BJ (cell line): ENCODE measurements at regions of chr22 and their contacts with region 1.

Region 1: GRCh38 chr22:20393909-20394691 is at the start of gene ZNF74:
- DNase-seq: peak; percentile 67
- H3K4me3 ChIP-seq: peak within 1 kb of the TSS; percentile 59
- H3K27me3 ChIP-seq: 0 out of 2 replicates have a peak, but pooled peaks cover 1% of the 10 kb centered on the region
- CTCF ChIP-seq: peak; percentile 17; the same call in 1 of the 2 replicates
- polyA plus RNA-seq, gene ZNF74: 4.5 and 6.9 TPM in 2 replicates

Region 2: DNA sequence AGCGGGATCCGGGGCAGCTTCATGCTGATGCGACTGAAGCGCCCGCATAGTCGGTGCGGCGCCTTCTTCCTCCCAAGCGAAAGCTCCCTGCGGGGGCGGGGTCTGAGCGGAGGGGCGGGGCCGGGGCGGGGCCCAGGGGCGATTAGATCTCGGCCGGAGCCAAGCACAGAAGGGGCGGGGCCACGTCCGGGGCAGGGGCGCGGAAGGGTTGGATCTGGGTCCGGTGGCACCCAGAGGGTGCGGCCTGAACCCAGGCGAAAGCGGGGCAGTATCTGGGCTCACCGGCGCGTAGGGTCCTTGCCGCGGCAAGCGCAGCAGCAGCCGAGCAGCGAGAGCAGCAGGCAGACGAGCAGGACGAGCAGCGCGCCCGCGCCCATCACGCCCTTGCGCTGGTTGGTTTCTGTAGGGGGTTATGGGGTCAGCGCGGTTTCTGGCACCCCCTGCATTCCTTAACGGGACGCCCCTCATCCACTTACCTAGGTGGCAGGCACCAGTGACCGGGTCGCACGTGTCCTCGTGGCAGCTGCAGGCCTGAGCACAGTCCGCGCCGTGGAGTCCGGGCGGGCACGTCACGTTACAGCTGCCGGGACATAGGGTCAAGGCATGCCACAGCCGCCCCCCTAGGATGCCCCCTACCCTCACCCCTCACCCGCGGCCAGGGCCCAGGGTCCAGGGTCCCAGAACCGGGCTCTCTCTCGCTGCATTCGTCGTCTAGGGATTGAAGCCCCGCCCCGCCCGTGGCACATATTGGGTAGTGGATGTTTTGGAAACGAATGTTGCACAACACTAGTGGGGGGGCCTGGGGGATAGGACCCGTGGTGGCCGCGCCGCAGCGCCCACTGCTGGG is 35.4 kb after region 1 on chr22:
- CTCF ChIA-PET with region 1: no interaction called
- POLR2A ChIA-PET with region 1: interaction called, 11 read pairs
- DNase-seq: no peak
- H3K4me3 ChIP-seq: no peak overlapping the region
- H3K27me3 ChIP-seq: no peaks in the 10 kb centered on the region
- CTCF ChIP-seq: no peak

Region 3: DNA sequence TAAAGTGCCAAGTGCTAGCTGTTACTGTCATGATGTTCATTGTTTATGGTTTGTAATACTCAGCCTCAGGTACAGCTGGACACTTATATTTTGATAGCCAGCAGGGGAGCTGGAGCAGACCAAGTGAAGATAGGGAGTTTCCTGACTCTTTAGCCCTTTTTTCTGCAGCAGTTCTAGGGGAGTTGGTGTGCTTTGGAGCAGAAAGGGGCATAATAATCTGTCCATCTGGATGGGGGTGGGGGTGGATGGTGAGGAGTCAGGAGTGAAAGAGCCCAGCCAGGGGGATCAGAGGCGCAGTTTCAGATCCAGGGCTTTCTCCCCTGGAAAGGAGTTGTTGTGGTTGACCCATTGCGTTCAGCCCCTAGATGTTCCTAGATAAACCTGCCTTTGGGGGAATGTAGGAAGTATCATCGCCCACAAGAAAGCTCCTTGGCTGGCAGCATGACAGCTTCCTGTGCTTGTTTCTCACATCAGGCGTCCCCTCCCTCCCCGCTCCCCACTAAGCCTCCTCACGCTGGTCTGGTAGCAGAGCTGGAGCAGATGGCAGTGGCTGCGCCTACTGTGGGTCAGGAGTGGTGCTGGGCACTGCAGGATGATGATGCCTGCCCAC is 155.2 kb after region 1 on chr22:
- CTCF ChIA-PET with region 1: no interaction called
- POLR2A ChIA-PET with region 1: no interaction called
- DNase-seq: no peak
- H3K4me3 ChIP-seq: no peak overlapping the region
- H3K27me3 ChIP-seq: no peaks in the 10 kb centered on the region
- CTCF ChIP-seq: no peak